A549 (cell line): ENCODE measurements at regions of chr1 and their contacts with region 1.

Region 1: GRCh38 chr1:65209005-65209885 is 61.2 kb downstream of the AK4 start:
- DNase-seq: peak; percentile 28 to 62
- ATAC-seq: peak; percentile 82 to 83
- H3K4me3 ChIP-seq: no peak overlapping the region
- H3K27ac ChIP-seq: no peak overlapping the region
- H3K4me1 ChIP-seq: no peaks in the 10 kb centered on the region
- CTCF ChIP-seq: peak; percentile 54
- EP300 ChIP-seq: no peak
- POLR2A ChIP-seq: no peak
- RAD21 ChIP-seq: peak; percentile 60 to 62

Region 2: GRCh38 chr1:65065524-65066418 is 143.5 kb before region 1 on chr1:
- CTCF ChIA-PET with region 1: interaction called, 13 read pairs
- POLR2A ChIA-PET with region 1: no interaction called
- DNase-seq: peak in 1 of 2 experiments; percentile 12
- ATAC-seq: peak in 1 of 2 experiments; percentile 5; a peak in 3 of 6 replicates
- H3K4me3 ChIP-seq: peak overlapping the region; percentile 81
- H3K27ac ChIP-seq: peak overlapping the region; percentile 73 to 99
- H3K4me1 ChIP-seq: peaks cover 13% of the 10 kb centered on the region; the same call in 2 of the 3 replicates
- CTCF ChIP-seq: no peak
- EP300 ChIP-seq: no peak
- POLR2A ChIP-seq: no peak
- RAD21 ChIP-seq: no peak

Region 3: DNA sequence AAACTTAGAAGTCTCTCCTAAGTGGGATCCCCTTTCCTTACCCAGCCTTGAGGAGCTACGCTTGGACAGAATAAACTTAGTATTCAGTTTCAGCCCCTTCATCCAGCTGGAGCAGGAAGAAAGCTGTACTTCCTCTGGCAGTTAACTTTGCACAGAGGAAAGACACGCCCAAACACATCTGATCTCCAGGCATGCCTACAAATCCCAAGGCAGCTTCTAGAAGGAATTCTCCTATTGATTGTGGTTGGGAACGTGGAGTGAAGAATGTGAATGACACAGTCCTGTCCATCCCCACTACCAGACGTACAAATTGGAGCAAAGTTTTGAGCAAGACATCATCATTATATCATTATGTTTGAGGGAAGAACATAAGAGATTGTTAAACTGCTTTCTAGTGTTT is 67.9 kb before region 1 on chr1:
- CTCF ChIA-PET with region 1: no interaction called
- POLR2A ChIA-PET with region 1: no interaction called
- DNase-seq: no peak
- ATAC-seq: no peak
- H3K4me3 ChIP-seq: no peak overlapping the region
- H3K27ac ChIP-seq: no peak overlapping the region
- H3K4me1 ChIP-seq: 0 out of 3 replicates have a peak, but pooled peaks cover under 1% of the 10 kb centered on the region
- CTCF ChIP-seq: no peak
- EP300 ChIP-seq: no peak
- POLR2A ChIP-seq: no peak
- RAD21 ChIP-seq: no peak

Region 4: GRCh38 chr1:65198096-65198495 is 11.1 kb before region 1 on chr1:
- CTCF ChIA-PET with region 1: interaction called, 13 read pairs
- POLR2A ChIA-PET with region 1: no interaction called
- DNase-seq: no peak
- ATAC-seq: no peak
- H3K4me3 ChIP-seq: no peak overlapping the region
- H3K27ac ChIP-seq: no peak overlapping the region
- H3K4me1 ChIP-seq: no peaks in the 10 kb centered on the region
- CTCF ChIP-seq: no peak
- EP300 ChIP-seq: no peak
- POLR2A ChIP-seq: no peak
- RAD21 ChIP-seq: no peak

Region 5: GRCh38 chr1:65221638-65222339 is 12.5 kb after region 1 on chr1:
- CTCF ChIA-PET with region 1: interaction called, 16 read pairs
- POLR2A ChIA-PET with region 1: no interaction called
- DNase-seq: no peak
- ATAC-seq: no peak
- H3K4me3 ChIP-seq: no peak overlapping the region
- H3K27ac ChIP-seq: no peak overlapping the region
- H3K4me1 ChIP-seq: no peaks in the 10 kb centered on the region
- CTCF ChIP-seq: no peak
- EP300 ChIP-seq: no peak
- POLR2A ChIP-seq: no peak
- RAD21 ChIP-seq: no peak

Region 6: GRCh38 chr1:65292861-65293593 is 83.8 kb after region 1 on chr1:
- CTCF ChIA-PET with region 1: no interaction called
- POLR2A ChIA-PET with region 1: no interaction called
- DNase-seq: no peak
- ATAC-seq: no peak
- H3K4me3 ChIP-seq: no peak overlapping the region
- H3K27ac ChIP-seq: no peak overlapping the region
- H3K4me1 ChIP-seq: no peaks in the 10 kb centered on the region
- CTCF ChIP-seq: no peak
- EP300 ChIP-seq: no peak
- POLR2A ChIP-seq: no peak
- RAD21 ChIP-seq: no peak

Region 7: GRCh38 chr1:65412984-65413375 is 203.7 kb after region 1 on chr1:
- CTCF ChIA-PET with region 1: no interaction called
- POLR2A ChIA-PET with region 1: no interaction called
- DNase-seq: no peak
- ATAC-seq: no peak
- H3K4me3 ChIP-seq: no peak overlapping the region
- H3K27ac ChIP-seq: no peak overlapping the region
- H3K4me1 ChIP-seq: peaks cover 12% of the 10 kb centered on the region
- CTCF ChIP-seq: no peak
- EP300 ChIP-seq: no peak
- POLR2A ChIP-seq: no peak
- RAD21 ChIP-seq: no peak